H1 (cell line): ENCODE measurements at regions of chr17 and their contacts with region 1.

Region 1: GRCh38 chr17:75667021-75667790 is at the starts of genes RECQL5 and SAP30BP:
- DNase-seq: peak; percentile 94 to 97
- H3K4me3 ChIP-seq: peak within 1 kb of the TSS; percentile 81 to 99 (median 96)
- H3K27ac ChIP-seq: peak within 1 kb of the TSS; percentile 88
- H3K4me1 ChIP-seq: peaks cover 0 to 13% (median 3%) of the 10 kb centered on the region in 4 experiments; a peak in 2 of 7 replicates
- H3K27me3 ChIP-seq: no peaks in the 10 kb centered on the region
- CTCF ChIP-seq: no peak
- EP300 ChIP-seq: no peak
- POLR2A ChIP-seq: peak; percentile 79 to 88
- RAD21 ChIP-seq: no peak
- total RNA-seq, gene RECQL5: 40.7 and 41.1 TPM in 2 replicates
- total RNA-seq, gene SAP30BP: 79.9 and 81.5 TPM in 2 replicates

Region 2: DNA sequence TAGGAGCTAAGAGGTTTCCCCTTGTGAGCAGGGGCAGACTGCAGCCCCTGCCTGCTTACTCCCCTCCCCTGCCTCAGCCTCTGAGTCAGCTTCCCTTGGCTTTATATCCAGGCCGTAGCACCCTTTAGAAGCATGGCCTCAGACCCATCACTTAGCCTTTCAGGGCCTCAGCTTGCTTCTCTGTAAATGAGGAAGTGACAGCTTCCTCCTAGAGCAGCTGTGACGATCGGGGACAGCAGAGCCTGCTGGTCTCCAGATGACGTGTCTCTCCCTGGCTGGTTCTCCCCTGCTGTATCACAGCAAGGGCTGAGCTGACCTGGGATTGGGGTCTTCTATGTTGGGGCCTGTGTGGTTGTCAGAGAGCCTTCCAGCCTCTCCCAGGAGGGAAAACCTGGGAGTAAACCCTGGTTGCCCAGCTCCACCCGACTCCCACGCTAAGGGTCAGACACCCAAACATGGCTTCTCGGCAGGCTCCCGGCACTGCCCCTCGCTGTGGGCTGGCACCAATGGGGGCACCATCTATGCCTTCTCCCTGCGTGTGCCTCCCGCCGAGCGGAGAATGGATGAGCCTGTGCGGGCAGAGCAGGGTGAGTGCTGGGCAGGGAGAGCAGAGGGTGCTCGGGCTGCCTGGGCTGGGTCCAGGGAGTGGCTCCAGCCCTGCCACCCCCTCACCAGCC is 95.9 kb before region 1 on chr17:
- CTCF ChIA-PET with region 1: no interaction called
- POLR2A ChIA-PET with region 1: no interaction called
- DNase-seq: no peak
- H3K4me3 ChIP-seq: no peak overlapping the region
- H3K27ac ChIP-seq: no peak overlapping the region
- H3K4me1 ChIP-seq: no peaks in the 10 kb centered on the region
- H3K27me3 ChIP-seq: no peaks in the 10 kb centered on the region
- CTCF ChIP-seq: no peak
- EP300 ChIP-seq: no peak
- POLR2A ChIP-seq: no peak
- RAD21 ChIP-seq: no peak

Region 3: DNA sequence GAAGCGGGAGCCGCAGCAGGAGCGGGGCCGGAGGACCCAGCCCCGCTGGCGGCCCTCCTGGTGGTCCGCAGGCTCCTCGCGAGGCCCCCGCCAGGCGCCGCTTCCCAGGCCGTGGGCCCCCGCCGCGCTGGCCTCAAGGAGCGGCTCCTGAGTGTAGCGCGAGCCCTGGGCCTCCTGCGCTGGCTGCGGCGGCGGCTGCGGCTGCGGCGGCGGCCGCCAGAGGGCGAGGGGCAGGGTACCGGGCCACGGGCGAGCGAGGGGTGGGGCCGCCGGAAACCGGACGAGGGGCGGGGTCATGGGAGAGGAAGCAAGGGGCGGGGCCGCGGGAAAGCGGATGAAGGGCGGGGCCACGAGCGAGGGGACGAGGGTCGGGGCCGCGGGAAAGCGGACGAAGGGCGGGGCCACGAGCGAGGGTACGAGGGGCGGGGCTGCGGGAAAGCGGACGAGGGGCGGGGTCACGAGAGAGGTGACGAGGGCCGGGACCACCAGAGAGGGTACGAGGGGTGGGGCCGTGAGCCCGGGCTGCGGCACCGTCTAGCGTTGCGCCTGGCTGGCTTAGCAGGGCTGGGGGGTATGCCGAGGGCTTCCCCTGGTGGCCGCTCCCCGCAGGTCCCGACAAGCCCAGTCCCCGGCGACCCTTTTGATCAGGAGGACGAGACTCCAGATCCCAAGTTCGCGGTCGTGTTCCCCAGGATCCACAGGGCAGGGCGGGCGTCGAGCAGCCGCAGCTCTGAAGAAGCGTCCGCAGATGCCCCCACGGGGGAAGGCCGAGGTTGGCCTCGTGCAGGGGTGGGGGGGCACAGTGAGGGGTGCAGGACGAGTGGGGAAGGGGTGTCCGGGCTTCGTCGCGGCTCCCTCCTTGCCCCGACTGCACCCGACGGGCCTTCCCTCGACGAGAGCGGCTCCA is 77.9 kb before region 1 on chr17:
- CTCF ChIA-PET with region 1: interaction called, 2,200 read pairs
- POLR2A ChIA-PET with region 1: no interaction called
- DNase-seq: peak; percentile 88 to 94
- H3K4me3 ChIP-seq: peak overlapping the region; percentile 40 to 67 (median 58); a peak in 7 of 8 replicates
- H3K27ac ChIP-seq: no peak overlapping the region; the same call in 1 of the 2 replicates
- H3K4me1 ChIP-seq: peaks cover 0 to 9% (median 3%) of the 10 kb centered on the region in 4 experiments; a peak in 5 of 7 replicates
- H3K27me3 ChIP-seq: peaks cover 0 to 19% (median 5%) of the 10 kb centered on the region in 4 experiments; a peak in 4 of 7 replicates
- CTCF ChIP-seq: peak; percentile 61 to 77 (median 72)
- EP300 ChIP-seq: peak in 1 of 2 experiments; percentile 79; a peak in 1 of 3 replicates
- POLR2A ChIP-seq: peak in 1 of 2 experiments; percentile 45; a peak in 1 of 3 replicates
- RAD21 ChIP-seq: peak; percentile 49 to 57; a peak in 3 of 4 replicates

Region 4: DNA sequence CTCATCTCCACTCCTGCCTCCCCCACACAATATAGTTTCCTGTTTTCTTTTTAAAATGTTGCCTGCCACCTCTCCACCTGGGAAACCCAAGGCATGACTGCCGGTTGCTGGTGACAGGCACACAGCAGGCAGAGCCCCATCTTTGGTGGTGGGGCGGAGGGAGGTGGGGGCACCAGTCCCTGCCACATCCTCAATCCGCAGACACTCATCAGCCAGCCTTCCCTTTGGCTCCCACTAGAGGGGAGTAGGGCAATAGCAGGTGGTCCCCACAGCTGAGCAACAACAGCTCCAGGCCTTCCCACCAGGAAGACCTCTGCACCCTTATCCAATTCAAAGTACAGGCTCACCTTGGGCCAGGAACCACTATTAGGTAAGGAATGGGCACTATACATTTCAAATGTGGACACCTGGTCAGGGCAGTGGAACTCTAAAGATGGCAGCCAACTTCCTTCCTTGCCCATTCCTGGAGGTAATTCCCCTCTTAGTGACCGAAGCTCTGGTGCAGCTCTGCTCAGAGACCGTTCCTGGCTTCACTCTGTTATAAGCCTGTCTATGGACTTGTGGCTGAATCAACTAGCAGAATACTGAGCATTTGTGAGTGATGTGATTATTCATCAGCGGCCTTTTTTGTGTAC is 14.2 kb before region 1 on chr17:
- CTCF ChIA-PET with region 1: interaction called, 2,200 read pairs
- POLR2A ChIA-PET with region 1: interaction called, 42 read pairs
- DNase-seq: peak in 1 of 2 experiments; percentile 77
- H3K4me3 ChIP-seq: no peak overlapping the region
- H3K27ac ChIP-seq: no peak overlapping the region
- H3K4me1 ChIP-seq: no peaks in the 10 kb centered on the region
- H3K27me3 ChIP-seq: no peaks in the 10 kb centered on the region
- CTCF ChIP-seq: peak; percentile 92 to 94 (median 93)
- EP300 ChIP-seq: no peak
- POLR2A ChIP-seq: no peak
- RAD21 ChIP-seq: peak; percentile 69 to 77

Region 5: DNA sequence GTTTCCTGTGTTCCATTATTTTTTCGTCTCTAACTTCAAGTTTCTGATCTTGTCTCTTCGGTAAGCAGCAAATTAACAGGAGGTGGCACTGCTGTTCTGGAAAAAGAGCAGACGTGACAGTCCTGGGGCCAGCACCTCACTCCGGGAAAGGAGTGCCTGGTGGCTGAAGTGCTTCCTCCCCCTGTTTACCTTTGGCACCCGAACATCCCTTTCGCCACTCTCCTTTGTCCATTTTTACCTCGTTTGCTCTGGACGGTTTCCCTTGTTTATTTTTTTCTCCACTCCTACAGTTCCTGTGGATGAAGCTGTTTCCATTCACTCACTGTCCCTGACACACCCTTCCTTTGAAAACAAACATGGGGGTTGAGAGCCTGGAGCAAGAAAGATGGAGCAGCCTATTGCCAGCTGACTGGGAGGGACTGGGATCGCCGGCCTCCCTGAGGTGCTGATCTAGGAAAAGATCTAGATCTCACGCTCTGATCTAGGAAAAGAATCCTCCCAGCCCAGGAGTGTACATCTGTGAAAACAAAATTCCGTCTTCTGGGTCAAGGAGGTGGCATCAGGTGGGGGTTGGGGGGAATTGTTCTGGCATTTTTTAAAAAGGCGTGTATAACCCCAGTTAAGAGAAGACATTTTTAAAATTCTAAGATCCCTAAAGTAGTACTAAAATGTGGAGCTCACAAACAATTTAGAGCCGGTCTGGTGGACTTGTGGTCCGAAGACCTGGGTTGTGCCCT is 12.7 kb after region 1 on chr17:
- CTCF ChIA-PET with region 1: interaction called, 8 read pairs
- POLR2A ChIA-PET with region 1: interaction called, 26 read pairs
- DNase-seq: no peak
- H3K4me3 ChIP-seq: no peak overlapping the region
- H3K27ac ChIP-seq: no peak overlapping the region
- H3K4me1 ChIP-seq: no peaks in the 10 kb centered on the region
- H3K27me3 ChIP-seq: no peaks in the 10 kb centered on the region
- CTCF ChIP-seq: no peak
- EP300 ChIP-seq: no peak
- POLR2A ChIP-seq: no peak
- RAD21 ChIP-seq: no peak

Region 6: DNA sequence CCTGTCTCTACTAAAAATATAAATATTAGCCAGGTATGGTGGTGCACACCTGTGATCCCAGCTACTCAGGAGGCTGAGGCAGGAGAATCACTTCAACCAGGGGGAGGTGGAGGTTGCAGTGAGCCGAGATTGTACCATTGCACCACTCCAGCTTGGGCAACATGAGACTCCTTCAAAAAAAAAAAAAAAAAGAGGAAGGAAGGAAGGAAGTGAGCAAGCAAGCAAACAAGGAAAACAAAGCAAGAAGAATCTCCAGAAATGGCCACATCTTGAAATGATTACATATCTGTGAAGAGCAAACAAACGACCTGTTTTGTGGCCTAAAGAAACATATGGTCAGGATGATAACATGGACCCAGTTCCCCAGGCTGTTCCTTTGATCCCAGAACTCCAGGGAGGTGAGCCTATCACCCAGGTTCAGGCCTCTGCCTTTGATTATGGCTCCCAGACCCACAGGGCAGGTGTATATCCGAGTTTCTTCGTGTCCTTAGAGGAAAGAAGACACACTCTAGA is 302.9 kb after region 1 on chr17:
- CTCF ChIA-PET with region 1: no interaction called
- POLR2A ChIA-PET with region 1: no interaction called
- DNase-seq: no peak
- H3K4me3 ChIP-seq: no peak overlapping the region
- H3K27ac ChIP-seq: no peak overlapping the region
- H3K4me1 ChIP-seq: no peaks in the 10 kb centered on the region
- H3K27me3 ChIP-seq: no peaks in the 10 kb centered on the region
- CTCF ChIP-seq: no peak
- EP300 ChIP-seq: no peak
- POLR2A ChIP-seq: no peak
- RAD21 ChIP-seq: no peak